AG04450 (cell line): ENCODE measurements at regions of chr1 and their contacts with region 1.

Region 1: GRCh38 chr1:200877839-200878551 is 5.2 kb downstream of the GPR25 start:
- DNase-seq: no peak
- H3K4me3 ChIP-seq: no peak overlapping the region
- H3K27ac ChIP-seq: no peak overlapping the region
- H3K27me3 ChIP-seq: peaks cover 59% of the 10 kb centered on the region
- CTCF ChIP-seq: no peak

Region 2: DNA sequence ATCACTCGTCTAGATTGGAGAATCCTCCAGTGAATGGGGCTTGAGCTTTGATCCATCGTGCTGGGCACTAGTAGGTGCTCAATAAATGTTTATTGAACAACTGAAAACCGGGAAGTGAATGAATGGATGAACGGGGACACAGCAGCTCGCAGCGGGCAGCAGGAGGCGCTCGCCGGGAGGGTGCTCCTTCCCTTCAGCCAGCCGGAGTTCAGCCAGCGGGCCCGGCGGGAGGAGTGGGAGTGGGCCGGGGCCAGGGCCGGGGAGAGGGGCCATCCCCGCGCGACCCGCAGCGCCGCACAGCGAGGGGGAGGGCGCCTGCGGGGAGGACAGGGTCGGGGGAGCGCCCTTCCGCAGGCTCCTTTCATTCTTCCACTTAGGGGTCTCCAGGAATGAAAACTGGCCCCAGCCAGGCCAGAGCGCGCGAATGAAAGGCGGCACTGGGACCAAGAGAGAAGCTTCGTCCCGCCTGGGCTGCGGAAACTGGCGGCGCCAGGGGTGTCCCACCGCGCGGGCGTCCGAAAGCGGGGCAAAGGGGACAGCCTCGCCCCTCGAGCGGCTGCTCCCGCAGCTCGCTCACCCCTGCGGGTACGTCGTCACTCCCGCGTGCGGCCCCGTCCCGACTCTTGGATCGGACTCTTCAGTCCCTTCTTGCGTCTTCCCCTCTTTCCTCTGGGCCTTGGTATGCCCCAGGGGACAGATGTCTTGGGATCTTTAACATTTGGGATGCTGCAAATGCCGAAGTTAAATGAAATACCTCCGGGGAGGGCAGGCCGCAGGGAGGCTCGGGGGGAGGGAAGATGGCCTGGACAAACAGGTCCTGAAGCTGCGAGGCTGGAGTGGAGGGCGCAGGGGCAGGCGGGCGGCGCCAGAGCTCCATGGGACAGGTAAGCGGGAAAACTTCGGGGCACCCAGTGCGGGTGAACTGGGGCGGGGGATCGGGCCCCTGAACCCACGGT is 13.1 kb after region 1 on chr1:
- CTCF ChIA-PET with region 1: interaction called, 15 read pairs
- POLR2A ChIA-PET with region 1: no interaction called
- DNase-seq: no peak
- H3K4me3 ChIP-seq: peak overlapping the region; percentile 53
- H3K27ac ChIP-seq: no peak overlapping the region
- H3K27me3 ChIP-seq: peaks cover 78% of the 10 kb centered on the region
- CTCF ChIP-seq: peak; percentile 53

Region 3: GRCh38 chr1:201023517-201023902 is 145.5 kb after region 1 on chr1 and contains the start of gene KIF21B:
- CTCF ChIA-PET with region 1: no interaction called
- POLR2A ChIA-PET with region 1: no interaction called
- DNase-seq: no peak
- H3K4me3 ChIP-seq: peak within 1 kb of the TSS; percentile 61
- H3K27ac ChIP-seq: no peak within 1 kb of the TSS
- H3K27me3 ChIP-seq: peaks cover 6% of the 10 kb centered on the region
- CTCF ChIP-seq: no peak
- polyA plus RNA-seq, gene KIF21B: 0.22 and 0.24 TPM in 2 replicates

Region 4: DNA sequence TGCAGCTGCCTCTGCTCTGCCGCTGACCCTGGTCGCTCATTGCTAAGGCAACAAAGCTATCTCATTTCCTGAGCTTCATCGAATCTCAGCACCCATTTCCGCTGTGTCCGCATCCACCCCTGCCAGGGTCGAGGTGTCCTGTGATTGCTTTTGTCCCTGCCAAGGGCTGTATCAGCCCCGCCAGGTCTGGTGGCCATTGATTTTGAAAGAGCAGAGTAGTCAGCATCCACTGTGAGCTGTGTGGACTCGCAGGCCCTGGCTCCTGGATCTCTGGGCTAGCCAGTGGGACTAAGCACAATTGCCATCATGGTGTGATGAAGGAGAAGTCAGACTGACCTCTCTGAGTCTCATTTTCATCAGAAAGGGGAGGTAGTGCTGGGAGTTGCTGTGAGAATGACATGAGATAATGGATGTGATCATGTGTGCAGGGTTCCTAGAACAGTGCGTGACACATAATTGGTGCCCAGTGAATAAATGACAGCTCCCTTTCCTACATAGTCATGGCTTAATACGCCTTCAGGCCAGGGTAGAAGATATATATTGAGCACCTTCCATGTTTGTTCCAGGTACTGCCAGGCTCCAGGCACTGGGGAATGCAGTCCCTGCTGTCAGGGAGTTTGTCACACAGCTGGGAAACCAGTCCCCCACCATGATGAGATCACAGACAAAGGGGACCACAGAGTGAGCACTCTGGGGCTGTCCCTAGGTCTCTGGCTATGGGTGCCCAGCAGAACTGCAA is 693.1 kb after region 1 on chr1:
- CTCF ChIA-PET with region 1: no interaction called
- POLR2A ChIA-PET with region 1: no interaction called
- DNase-seq: no peak
- H3K4me3 ChIP-seq: no peak overlapping the region
- H3K27ac ChIP-seq: no peak overlapping the region
- H3K27me3 ChIP-seq: no peaks in the 10 kb centered on the region
- CTCF ChIP-seq: no peak